A549 (cell line): ENCODE measurements at regions of chr17 and their contacts with region 1.

Region 1: GRCh38 chr17:16521070-16521727 is 29.2 kb upstream of the LRRC75A start:
- DNase-seq: peak; percentile 95 to 98
- ATAC-seq: peak; percentile 95 to 97
- H3K4me3 ChIP-seq: no peak overlapping the region
- H3K27ac ChIP-seq: peak overlapping the region; percentile 58 to 80
- H3K4me1 ChIP-seq: peaks cover 17% of the 10 kb centered on the region
- CTCF ChIP-seq: peak; percentile 99
- EP300 ChIP-seq: no peak
- POLR2A ChIP-seq: no peak
- RAD21 ChIP-seq: peak; percentile 98 to 100

Region 2: DNA sequence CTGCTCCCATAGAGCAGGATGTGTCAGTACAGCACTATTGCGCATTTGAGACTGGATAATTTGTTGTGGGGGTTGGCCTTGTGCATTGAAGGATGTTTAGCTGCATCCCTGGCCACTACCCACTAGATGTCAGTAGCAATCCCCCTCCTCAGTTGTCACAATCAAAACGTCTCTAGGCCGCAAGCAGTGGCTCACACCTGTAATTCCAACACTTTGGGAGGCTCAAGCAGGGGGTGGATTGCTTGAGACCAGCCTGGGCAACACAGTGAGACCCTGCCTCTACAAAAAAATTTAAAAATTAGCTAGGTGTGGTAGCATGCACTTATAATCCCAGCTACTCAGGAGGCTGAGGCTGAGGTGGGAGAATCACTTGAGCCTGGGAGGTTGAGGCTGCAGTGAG is 216.4 kb before region 1 on chr17:
- CTCF ChIA-PET with region 1: interaction called, 29 read pairs
- POLR2A ChIA-PET with region 1: no interaction called
- DNase-seq: peak in 1 of 2 experiments; percentile 78
- ATAC-seq: peak; percentile 93 to 95
- H3K4me3 ChIP-seq: no peak overlapping the region
- H3K27ac ChIP-seq: peak overlapping the region; percentile 20 to 58; a peak in 4 of 6 replicates
- H3K4me1 ChIP-seq: peaks cover 18% of the 10 kb centered on the region
- CTCF ChIP-seq: peak; percentile 72
- EP300 ChIP-seq: no peak
- POLR2A ChIP-seq: no peak
- RAD21 ChIP-seq: peak; percentile 80 to 83

Region 3: DNA sequence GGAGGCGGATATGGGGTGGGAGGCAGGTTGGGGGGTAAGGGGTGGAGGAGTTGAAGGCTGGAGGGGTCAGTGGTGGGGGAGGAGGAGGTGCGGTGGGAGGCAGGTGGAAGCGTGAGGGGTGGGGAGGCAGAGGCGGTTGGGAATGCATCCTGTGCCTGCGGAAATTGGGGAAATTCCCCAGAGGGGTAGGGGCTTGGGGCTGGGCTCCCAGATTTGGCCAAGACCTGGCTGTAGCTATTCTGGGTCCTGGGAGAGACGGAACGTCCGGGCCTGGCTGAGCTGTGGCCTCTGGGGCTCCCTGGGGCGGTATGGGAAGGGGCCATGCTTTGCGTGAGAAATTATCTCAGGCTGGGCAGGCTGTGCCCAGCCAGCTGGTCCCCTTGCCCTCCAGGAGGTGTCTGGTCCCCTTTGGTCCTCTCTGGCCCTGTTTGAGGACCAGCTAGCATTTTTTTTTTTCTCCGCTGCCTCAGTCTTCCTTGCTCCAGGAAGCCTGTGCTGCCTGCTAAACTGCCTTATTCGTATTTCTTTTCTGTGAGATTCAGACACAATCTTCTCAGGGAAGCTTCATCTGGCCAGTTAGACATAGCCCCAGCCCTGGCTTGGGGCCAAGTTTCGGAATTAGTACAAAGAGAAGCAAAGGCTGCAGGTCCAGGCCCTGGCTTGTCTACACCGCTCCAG is 113.1 kb before region 1 on chr17:
- CTCF ChIA-PET with region 1: interaction called, 10 read pairs
- POLR2A ChIA-PET with region 1: no interaction called
- DNase-seq: peak in 1 of 2 experiments; percentile 60
- ATAC-seq: peak; percentile 56 to 69
- H3K4me3 ChIP-seq: no peak overlapping the region
- H3K27ac ChIP-seq: peak overlapping the region in 1 of 2 experiments; percentile 87; a peak in 4 of 6 replicates
- H3K4me1 ChIP-seq: peaks cover 19% of the 10 kb centered on the region
- CTCF ChIP-seq: no peak
- EP300 ChIP-seq: no peak
- POLR2A ChIP-seq: no peak
- RAD21 ChIP-seq: no peak

Region 4: DNA sequence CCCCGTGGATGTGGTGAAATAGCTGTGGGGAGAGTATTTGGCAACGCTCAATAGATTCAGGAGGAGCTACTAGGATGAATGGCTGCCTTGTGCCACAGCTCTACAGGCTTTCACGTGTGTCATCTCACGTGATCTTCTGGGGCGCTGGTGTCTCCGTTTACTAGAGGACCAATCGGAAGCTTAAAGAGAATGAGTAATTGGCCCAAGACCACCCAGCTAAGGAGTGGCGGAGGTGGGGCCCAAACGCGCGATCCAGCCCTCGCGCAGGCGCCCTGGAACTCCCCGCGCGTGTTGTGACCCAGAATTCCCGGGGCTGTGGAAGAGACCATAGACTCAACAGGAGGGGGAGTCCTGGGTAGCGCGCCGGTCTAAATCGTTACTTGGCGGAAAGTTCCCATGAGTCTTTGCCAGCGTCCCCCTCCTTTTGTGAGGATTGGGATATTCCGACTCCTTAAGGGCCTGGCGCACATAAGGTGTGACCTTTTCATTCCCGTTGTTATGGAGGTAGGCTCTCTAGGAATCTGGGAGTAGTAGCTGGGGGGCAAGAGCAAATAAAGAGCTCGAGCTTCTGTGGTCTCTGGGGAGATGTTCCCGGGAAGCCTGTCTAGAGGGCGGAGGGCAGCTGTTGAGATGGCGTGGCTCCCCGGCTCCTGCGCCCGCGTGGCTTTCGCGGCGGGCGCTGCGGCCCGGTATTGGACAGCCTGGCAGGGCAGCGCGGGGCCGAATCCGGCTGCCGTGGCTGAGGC is 82.5 kb before region 1 on chr17:
- CTCF ChIA-PET with region 1: interaction called, 589 read pairs
- POLR2A ChIA-PET with region 1: interaction called, 6 read pairs
- DNase-seq: peak; percentile 100
- ATAC-seq: peak; percentile 84 to 89
- H3K4me3 ChIP-seq: peak overlapping the region; percentile 75
- H3K27ac ChIP-seq: peak overlapping the region; percentile 90 to 99
- H3K4me1 ChIP-seq: peaks cover 37% of the 10 kb centered on the region
- CTCF ChIP-seq: no peak
- EP300 ChIP-seq: no peak
- POLR2A ChIP-seq: peak; percentile 96
- RAD21 ChIP-seq: no peak; a peak in 1 of 5 replicates

Region 5: GRCh38 chr17:16477255-16477654 is 43.9 kb before region 1 on chr17:
- CTCF ChIA-PET with region 1: interaction called, 47 read pairs
- POLR2A ChIA-PET with region 1: no interaction called
- DNase-seq: peak; percentile 69 to 88
- ATAC-seq: peak; percentile 83 to 92
- H3K4me3 ChIP-seq: no peak overlapping the region
- H3K27ac ChIP-seq: peak overlapping the region; percentile 69 to 89
- H3K4me1 ChIP-seq: peaks cover 12% of the 10 kb centered on the region
- CTCF ChIP-seq: no peak
- EP300 ChIP-seq: no peak
- POLR2A ChIP-seq: no peak
- RAD21 ChIP-seq: no peak

Region 6: GRCh38 chr17:16491703-16492612 is 29.2 kb before region 1 on chr17 and contains the start of gene LRRC75A:
- CTCF ChIA-PET with region 1: interaction called, 61 read pairs
- POLR2A ChIA-PET with region 1: interaction called, 3 read pairs
- DNase-seq: peak in 1 of 2 experiments; percentile 53
- ATAC-seq: peak; percentile 73 to 82
- H3K4me3 ChIP-seq: peak within 1 kb of the TSS; percentile 94
- H3K27ac ChIP-seq: peak within 1 kb of the TSS; percentile 77 to 85
- H3K4me1 ChIP-seq: peaks cover 5% of the 10 kb centered on the region; the same call in 2 of the 3 replicates
- CTCF ChIP-seq: no peak
- EP300 ChIP-seq: no peak
- POLR2A ChIP-seq: peak; percentile 17; the same call in 1 of the 2 replicates
- RAD21 ChIP-seq: no peak
- polyA plus RNA-seq, gene LRRC75A: 0.65 and 0.78 TPM in 2 replicates

Region 7: DNA sequence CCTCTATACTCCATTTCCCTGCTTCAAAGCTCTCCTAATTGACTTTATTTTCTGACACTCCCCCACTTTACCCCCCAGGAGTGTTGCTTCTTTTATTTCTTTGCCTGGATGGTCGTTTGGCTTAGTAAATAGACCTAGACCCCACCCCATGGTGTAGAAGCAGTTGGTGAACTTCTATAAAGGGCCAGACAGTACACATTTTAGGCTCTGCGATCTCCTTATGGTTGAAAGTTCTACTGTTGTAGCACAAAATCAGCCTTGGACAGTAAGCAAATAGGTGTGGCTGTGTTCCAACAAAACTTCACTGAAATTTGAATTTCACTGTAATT is 15.9 kb after region 1 on chr17:
- CTCF ChIA-PET with region 1: interaction called, 64 read pairs
- POLR2A ChIA-PET with region 1: interaction called, 10 read pairs
- DNase-seq: no peak
- ATAC-seq: no peak
- H3K4me3 ChIP-seq: no peak overlapping the region
- H3K27ac ChIP-seq: no peak overlapping the region
- H3K4me1 ChIP-seq: no peaks in the 10 kb centered on the region
- CTCF ChIP-seq: no peak
- EP300 ChIP-seq: no peak
- POLR2A ChIP-seq: no peak
- RAD21 ChIP-seq: no peak

Region 8: DNA sequence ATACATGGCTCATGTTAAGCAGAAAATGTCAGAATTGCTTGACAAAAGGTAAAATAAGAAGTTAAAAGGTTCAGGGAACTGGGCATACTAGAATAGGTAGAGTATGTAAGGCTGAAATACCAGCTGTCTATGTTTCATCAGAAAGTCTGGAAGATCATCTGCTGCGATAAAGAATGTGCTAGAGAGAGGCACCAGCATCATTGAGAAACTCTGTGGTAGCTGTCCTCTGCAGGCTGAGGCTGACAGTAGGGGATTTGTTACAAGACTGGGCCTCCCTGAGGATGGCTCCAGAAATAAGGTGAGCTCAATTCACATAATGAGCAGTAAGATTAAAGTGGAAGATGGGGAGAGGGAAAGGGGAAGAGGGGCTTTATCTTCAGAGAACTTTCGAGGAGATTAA is 52.3 kb after region 1 on chr17:
- CTCF ChIA-PET with region 1: no interaction called
- POLR2A ChIA-PET with region 1: no interaction called
- DNase-seq: no peak
- ATAC-seq: no peak
- H3K4me3 ChIP-seq: no peak overlapping the region
- H3K27ac ChIP-seq: no peak overlapping the region
- H3K4me1 ChIP-seq: no peaks in the 10 kb centered on the region
- CTCF ChIP-seq: no peak
- EP300 ChIP-seq: no peak
- POLR2A ChIP-seq: no peak
- RAD21 ChIP-seq: no peak